Sigmoid colon (tissue), 7 donors: ENCODE measurements at regions of chr2 and their contacts with region 1.

Region 1: GRCh38 chr2:201378496-201379397 is 21.6 kb upstream of the FLACC1 start:
- DNase-seq: no peak
- H3K4me3 ChIP-seq: no peak overlapping the region
- H3K27ac ChIP-seq: peak overlapping the region in 3 of 4 donors; percentile 66 to 81 (median 80)
- H3K4me1 ChIP-seq: peaks cover 0 to 36% (median 27%) of the 10 kb centered on the region in 4 donors
- H3K27me3 ChIP-seq: no peaks in the 10 kb centered on the region
- CTCF ChIP-seq: no peak
- EP300 ChIP-seq: peak; percentile 10 to 89 (median 62)
- POLR2A ChIP-seq: no peak

Region 2: DNA sequence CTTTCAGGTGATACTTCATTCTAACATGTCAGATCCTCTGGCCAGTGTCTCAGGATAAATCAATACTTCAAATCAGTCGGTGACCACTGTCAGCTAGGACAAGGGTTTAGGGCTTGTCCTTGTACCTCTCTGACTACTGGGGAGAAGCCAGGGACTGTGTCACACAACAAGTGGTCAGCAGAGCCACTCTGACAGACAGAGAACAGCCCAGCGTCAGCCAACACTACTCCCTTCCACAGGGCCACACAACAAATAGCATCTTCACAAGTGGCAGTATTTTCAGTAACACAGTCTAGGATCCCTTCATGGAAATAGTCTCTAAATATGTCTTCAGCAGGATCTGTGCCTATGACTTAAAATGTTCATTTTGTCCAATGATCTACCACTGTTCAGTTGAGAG is 35.8 kb before region 1 on chr2:
- intact Hi-C with region 1: no loop called
- DNase-seq: no peak
- H3K4me3 ChIP-seq: no peak overlapping the region
- H3K27ac ChIP-seq: no peak overlapping the region
- H3K4me1 ChIP-seq: peaks cover 0 to 4% (median 0%) of the 10 kb centered on the region in 4 donors
- H3K27me3 ChIP-seq: no peaks in the 10 kb centered on the region
- CTCF ChIP-seq: no peak
- EP300 ChIP-seq: no peak
- POLR2A ChIP-seq: no peak

Region 3: GRCh38 chr2:201414099-201415023 is 35.6 kb after region 1 on chr2:
- intact Hi-C with region 1: loop called (anchors 5 kb)
- DNase-seq: no peak
- H3K4me3 ChIP-seq: no peak overlapping the region
- H3K27ac ChIP-seq: peak overlapping the region in 3 of 4 donors; percentile 18 to 64 (median 45)
- H3K4me1 ChIP-seq: peaks cover 0 to 38% (median 21%) of the 10 kb centered on the region in 4 donors
- H3K27me3 ChIP-seq: no peaks in the 10 kb centered on the region
- CTCF ChIP-seq: no peak
- EP300 ChIP-seq: no peak
- POLR2A ChIP-seq: no peak